HEK293T (cell line): ENCODE measurements at regions of chr2 and their contacts with region 1.

Region 1: DNA sequence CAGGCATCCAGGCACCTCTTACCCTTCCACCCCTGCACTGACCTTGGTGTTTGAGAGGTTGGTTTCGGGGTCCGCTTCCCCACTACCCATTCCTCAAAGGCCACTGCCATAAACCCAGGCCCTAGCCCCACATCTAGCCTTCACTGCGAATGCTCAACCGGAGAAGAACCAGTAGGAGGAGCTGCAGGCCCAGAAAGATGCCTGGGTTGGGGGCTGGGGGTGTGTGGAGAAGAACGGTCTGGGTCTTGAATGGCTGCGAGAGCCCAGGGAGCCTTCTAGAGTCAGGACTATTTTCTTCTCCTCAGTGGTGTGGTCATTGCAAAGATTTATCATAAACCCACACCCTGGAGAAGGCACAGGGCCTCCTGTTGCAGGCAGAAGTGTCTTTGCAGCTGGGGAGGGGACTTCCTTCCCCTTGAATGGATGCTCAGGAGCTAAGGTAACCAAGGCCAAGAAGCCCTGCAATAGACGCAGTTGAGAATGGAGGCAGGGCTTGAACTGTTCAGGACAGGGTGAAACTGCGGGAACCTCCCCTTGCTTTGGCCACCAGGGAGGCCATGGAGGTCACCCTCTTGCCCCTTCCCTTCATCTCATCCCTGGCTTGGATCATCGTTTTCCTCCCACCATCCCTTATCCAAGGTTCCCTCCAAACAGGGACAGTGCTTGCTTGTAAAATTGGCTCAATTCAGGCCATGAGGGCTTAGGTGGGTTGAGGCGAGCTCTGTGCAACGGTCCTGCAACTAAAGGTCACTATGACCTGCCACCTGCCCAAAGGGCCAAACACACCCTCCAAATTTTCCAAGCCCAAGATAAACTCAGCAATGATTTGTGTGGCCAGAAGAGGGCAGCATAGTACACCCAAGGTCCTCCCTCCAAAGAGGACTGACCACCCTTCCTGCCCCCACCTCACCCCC is 20.9 kb downstream of the THNSL2 start:
- DNase-seq: peak; percentile 71

Region 2: DNA sequence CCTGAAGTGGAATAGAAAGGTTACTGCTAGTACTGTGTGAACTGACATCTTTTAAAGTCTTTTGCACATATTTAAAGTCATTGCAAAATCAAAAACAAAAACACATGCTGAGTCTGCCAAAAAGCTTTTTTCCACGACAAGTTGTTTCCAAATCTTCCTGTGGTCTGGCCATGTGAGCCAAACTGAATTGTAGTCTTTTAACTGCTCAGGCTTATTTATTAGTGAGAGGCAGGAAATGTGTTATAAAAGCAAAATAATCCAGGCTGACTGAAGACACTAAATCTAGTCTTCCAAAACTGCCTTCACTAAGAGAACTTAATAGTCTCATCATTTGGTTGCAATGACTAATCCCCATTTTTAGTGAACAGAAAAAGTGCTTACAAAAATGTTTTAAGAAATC is 137.8 kb before region 1 on chr2:
- CTCF ChIA-PET with region 1: no interaction called
- POLR2A ChIA-PET with region 1: no interaction called
- DNase-seq: no peak

Region 3: GRCh38 chr2:88451811-88452565 is 260.9 kb after region 1 on chr2:
- CTCF ChIA-PET with region 1: interaction called, 16 read pairs
- POLR2A ChIA-PET with region 1: no interaction called
- DNase-seq: peak; percentile 28